Activated CD8-positive, alpha-beta T cell treated with anti-CD3 and anti-CD28 coated beads, Interleukin-2, amount 10 ng/mL, durations not matched to agents 7 days and 5 days (primary cell): ENCODE measurements at regions of chr17 and their contacts with region 1.

Region 1: DNA sequence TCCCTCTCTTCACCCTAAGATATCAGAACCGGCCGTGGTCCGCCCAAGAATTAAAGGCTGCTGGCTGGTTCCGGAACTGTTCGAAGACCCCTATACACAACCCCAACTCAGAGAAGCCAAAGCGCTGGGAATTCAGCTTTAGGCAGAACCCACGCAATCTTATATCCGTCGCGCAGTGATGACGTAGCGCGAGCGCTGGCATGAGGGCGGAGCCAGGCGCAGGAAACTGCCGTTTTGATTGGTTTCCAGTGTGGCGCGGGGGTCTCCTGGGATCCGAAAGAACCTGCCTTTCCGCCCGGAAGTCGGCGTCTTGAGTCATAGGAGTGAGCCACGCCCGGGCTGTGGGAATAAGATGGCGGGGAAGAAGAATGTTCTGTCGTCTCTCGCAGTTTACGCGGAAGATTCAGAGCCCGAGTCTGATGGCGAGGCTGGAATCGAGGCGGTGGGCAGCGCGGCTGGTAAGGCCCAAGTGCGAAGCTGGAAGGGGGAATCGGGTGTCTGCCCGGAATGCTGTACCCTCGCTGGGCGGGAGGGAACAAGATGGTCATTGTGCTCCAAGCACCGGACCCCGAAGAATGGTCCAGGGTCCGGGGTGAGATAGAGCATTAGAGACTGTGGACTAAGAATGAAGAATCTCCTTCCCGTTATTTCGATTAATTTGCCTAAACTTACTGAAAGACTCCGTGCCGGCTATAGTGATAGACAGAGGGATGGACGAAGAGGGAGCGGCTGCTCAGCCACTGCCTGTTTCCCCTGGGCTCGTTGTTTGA is at the starts of genes RECQL5 and SAP30BP:
- DNase-seq: peak; percentile 99
- ATAC-seq: peak; percentile 100
- H3K4me3 Mint-ChIP-seq: peak within 1 kb of the TSS; percentile 63
- H3K27ac Mint-ChIP-seq: peak within 1 kb of the TSS; percentile 79
- H3K4me1 Mint-ChIP-seq: peaks cover 31% of the 10 kb centered on the region
- H3K27me3 Mint-ChIP-seq: no peaks in the 10 kb centered on the region
- total RNA-seq, gene RECQL5: 37.6 to 43.9 TPM
- total RNA-seq, gene SAP30BP: 88.7 to 93.7 TPM

Region 2: DNA sequence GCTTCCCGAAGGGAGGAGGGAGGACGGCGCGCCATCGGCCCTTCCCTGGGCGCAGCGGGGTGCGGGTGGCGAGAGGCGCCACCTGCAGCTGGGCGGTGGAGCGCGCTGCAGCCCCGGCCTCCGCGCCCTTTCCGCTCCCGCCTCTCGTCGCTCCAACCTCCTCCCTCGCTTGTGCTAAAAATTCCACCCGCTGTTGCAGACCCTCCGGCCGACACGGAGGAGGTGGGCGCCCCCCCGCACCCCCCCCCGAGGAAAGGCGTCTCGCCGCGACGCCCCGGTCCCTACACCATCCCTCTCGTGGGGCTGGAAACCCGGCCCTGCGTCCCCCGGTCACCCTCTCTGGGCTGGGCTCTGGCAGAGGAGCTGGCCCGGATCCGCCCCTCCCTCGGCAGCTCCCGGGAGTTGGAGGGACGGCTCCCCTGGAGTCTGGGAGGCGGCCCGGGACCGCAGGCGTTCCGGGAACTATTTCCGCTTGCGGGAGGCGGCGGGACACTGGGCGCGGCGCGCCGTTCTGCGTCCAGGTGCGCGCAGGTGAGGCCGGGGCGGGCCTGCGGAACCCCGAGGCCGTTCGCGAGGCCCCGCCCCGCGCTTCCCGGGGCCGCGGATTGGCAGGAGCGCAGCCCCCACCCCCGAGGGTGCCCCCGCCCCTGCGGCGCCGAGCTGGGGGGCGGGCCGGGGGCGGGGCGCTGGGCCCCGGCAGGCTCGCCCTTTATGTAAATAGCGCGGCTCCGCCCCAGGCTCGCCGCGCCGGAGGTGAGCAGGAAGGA is 142.1 kb before region 1 on chr17 and contains the start of gene LLGL2:
- CTCF ChIA-PET with region 1: no interaction called
- POLR2A ChIA-PET with region 1: no interaction called
- DNase-seq: peak; percentile 85
- ATAC-seq: peak; percentile 93
- H3K4me3 Mint-ChIP-seq: peak within 1 kb of the TSS; percentile 72
- H3K27ac Mint-ChIP-seq: peak within 1 kb of the TSS; percentile 39
- H3K4me1 Mint-ChIP-seq: peaks cover 19% of the 10 kb centered on the region
- H3K27me3 Mint-ChIP-seq: peaks cover 7% of the 10 kb centered on the region
- total RNA-seq, gene LLGL2: 19.3 to 19.8 TPM

Region 3: GRCh38 chr17:75652915-75653549 is 14.2 kb before region 1 on chr17:
- CTCF ChIA-PET with region 1: interaction called, 13 read pairs
- POLR2A ChIA-PET with region 1: interaction called, 15 read pairs
- DNase-seq: peak; percentile 60
- ATAC-seq: peak; percentile 79
- H3K4me3 Mint-ChIP-seq: no peak overlapping the region
- H3K27ac Mint-ChIP-seq: peak overlapping the region; percentile 72
- H3K4me1 Mint-ChIP-seq: peaks cover 15% of the 10 kb centered on the region
- H3K27me3 Mint-ChIP-seq: no peaks in the 10 kb centered on the region

Region 4: DNA sequence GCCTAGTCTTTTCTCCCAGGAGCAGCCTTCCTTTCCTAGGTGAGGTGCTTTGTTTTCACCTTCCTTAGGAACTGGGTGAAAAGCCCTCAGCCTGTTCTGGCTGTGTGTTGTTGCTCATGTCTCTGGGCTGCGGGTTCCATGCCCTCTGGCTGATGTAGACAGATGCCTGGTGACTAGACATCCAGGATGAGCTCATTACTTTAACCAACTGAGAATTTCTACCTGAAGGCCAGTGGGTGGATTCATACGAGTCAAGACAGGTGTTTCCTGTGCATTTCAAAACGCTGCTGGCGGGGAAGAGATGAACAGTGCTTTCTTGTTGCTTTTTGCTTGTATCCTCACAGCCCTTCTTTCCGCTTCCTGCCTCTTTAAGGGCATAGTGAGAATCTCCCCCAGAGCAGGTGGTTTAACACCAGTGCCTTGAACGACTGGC is 22.3 kb after region 1 on chr17:
- CTCF ChIA-PET with region 1: interaction called, 3 read pairs
- POLR2A ChIA-PET with region 1: interaction called, 16 read pairs
- DNase-seq: peak; percentile 76
- ATAC-seq: peak; percentile 69
- H3K4me3 Mint-ChIP-seq: peak overlapping the region; percentile 37
- H3K27ac Mint-ChIP-seq: peak overlapping the region; percentile 83
- H3K4me1 Mint-ChIP-seq: peaks cover 60% of the 10 kb centered on the region
- H3K27me3 Mint-ChIP-seq: no peaks in the 10 kb centered on the region